Calu3 (cell line): ENCODE measurements at regions of chr3 and their contacts with region 1.

Region 1: DNA sequence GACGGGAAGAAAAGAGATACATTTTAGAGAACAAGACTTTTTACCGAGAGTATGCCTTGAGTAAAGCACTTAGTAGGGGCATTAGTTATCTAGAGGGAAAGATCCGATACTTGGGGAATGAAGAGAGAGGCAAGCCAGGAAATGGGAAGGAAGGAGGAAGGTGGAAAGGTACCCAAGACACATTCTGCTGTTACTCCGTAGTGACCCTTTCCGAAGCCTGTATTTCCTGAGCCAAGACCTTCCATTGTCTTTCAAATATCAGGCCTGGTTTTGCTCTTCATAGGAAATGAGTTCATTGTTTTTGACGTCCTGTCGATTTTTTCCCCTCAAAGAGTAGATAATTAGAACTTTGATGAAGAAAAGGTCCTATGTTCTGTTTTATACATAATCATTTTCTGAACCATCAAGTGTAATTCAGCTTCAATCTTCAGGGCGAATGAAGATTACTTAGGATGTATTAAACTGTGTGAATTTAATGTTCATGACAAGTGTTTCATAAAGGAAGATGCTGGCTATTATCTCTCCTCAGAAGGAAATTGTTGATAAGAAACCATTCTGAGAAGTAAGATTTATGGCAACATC is 95.7 kb downstream of the PPM1L start:
- DNase-seq: no peak
- H3K4me3 Mint-ChIP-seq: no peak overlapping the region
- H3K27ac Mint-ChIP-seq: no peak overlapping the region
- H3K4me1 Mint-ChIP-seq: no peaks in the 10 kb centered on the region
- H3K27me3 Mint-ChIP-seq: no peaks in the 10 kb centered on the region
- CTCF ChIP-seq: no peak

Region 2: GRCh38 chr3:160822931-160823330 is 28.8 kb before region 1 on chr3:
- CTCF ChIA-PET with region 1: interaction called, 13 read pairs
- intact Hi-C with region 1: no loop called
- DNase-seq: no peak
- H3K4me3 Mint-ChIP-seq: no peak overlapping the region
- H3K27ac Mint-ChIP-seq: no peak overlapping the region
- H3K4me1 Mint-ChIP-seq: peaks cover 8% of the 10 kb centered on the region
- H3K27me3 Mint-ChIP-seq: no peaks in the 10 kb centered on the region
- CTCF ChIP-seq: no peak

Region 3: GRCh38 chr3:161028616-161029015 is 176.9 kb after region 1 on chr3:
- CTCF ChIA-PET with region 1: no interaction called
- intact Hi-C with region 1: no loop called
- DNase-seq: no peak
- H3K4me3 Mint-ChIP-seq: no peak overlapping the region
- H3K27ac Mint-ChIP-seq: no peak overlapping the region
- H3K4me1 Mint-ChIP-seq: no peaks in the 10 kb centered on the region
- H3K27me3 Mint-ChIP-seq: no peaks in the 10 kb centered on the region
- CTCF ChIP-seq: no peak